ENCODE measurements at regions of chr12 and their contacts with region 1.

Region 1: GRCh38 chr12:31659087-31659933 is at the start of gene ETFBKMT:
- DNase-seq: peak; percentile 96
- ATAC-seq: peak; percentile 97
- H3K4me3 ChIP-seq: peak within 1 kb of the TSS; percentile 63 to 94 (median 86)
- H3K4me3 Mint-ChIP-seq: peak within 1 kb of the TSS; percentile 93
- H3K27ac ChIP-seq: peak within 1 kb of the TSS; percentile 93 to 97
- H3K27ac Mint-ChIP-seq: peak within 1 kb of the TSS; percentile 95
- H3K4me1 ChIP-seq: peaks cover 25 to 31% of the 10 kb centered on the region in 2 donors
- H3K4me1 Mint-ChIP-seq: peaks cover 29% of the 10 kb centered on the region
- H3K27me3 ChIP-seq: no peaks in the 10 kb centered on the region
- H3K27me3 Mint-ChIP-seq: no peaks in the 10 kb centered on the region
- CTCF ChIP-seq: peak; percentile 31
- total RNA-seq, gene ETFBKMT: 1.4 and 2.4 TPM in 2 replicates

Region 2: GRCh38 chr12:31406345-31406744 is 253.0 kb before region 1 on chr12:
- CTCF ChIA-PET with region 1: interaction called, 58 read pairs
- POLR2A ChIA-PET with region 1: interaction called, 8 read pairs
- intact Hi-C with region 1: no loop called
- DNase-seq: peak; percentile 55
- ATAC-seq: peak; percentile 26
- H3K4me3 ChIP-seq: no peak overlapping the region
- H3K4me3 Mint-ChIP-seq: peak overlapping the region; percentile 40
- H3K27ac ChIP-seq: peak overlapping the region; percentile 50 to 51
- H3K27ac Mint-ChIP-seq: peak overlapping the region; percentile 28
- H3K4me1 ChIP-seq: peaks cover 23 to 44% of the 10 kb centered on the region in 2 donors
- H3K4me1 Mint-ChIP-seq: peaks cover 24% of the 10 kb centered on the region
- H3K27me3 ChIP-seq: no peaks in the 10 kb centered on the region
- H3K27me3 Mint-ChIP-seq: no peaks in the 10 kb centered on the region
- CTCF ChIP-seq: no peak

Region 3: DNA sequence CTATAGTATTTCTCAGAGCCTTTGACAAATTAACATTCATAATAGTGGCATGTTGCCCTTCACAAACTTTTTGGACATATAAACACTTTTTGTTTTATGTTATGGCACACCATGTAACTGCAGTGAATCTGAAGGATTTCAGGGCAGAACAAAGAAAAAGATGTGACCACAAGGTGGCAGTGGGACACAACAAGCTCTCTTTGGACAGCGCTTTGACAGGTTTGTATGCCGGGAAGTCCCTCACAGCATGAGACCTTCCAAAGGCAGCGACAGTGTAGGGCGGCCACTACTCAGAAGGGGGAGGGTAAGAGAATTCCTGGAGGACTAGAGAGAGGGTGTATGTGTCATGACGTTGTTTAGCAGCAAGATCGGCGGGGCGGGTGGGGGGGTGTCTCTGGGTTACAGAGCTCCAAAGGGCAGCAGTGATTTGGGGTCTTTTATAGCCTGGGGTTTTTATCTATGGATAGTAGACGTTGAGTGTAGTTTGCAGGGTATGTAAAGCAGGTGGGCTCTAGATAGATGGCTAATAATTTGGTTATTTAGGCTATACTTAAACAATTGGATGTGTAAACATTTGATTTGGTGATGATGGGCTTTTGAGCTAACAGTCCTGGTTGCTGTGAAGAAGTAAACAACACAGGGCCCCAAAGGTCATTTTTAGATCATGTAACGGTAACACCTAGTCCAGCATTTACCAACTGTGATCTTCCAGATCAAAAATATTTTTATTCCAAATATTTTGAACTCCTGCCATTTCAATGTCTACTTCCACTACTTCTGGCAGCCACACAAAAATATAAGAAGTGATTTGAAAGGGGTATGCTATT is 23.0 kb after region 1 on chr12:
- CTCF ChIA-PET with region 1: interaction called, 5 read pairs
- POLR2A ChIA-PET with region 1: interaction called, 6 read pairs
- intact Hi-C with region 1: loop called (anchors 1 kb)
- DNase-seq: peak; percentile 89
- ATAC-seq: peak; percentile 71
- H3K4me3 ChIP-seq: no peak overlapping the region
- H3K4me3 Mint-ChIP-seq: peak overlapping the region; percentile 69
- H3K27ac ChIP-seq: peak overlapping the region; percentile 50 to 73
- H3K27ac Mint-ChIP-seq: peak overlapping the region; percentile 93
- H3K4me1 ChIP-seq: peaks cover 19 to 30% of the 10 kb centered on the region in 2 donors
- H3K4me1 Mint-ChIP-seq: peaks cover 31% of the 10 kb centered on the region
- H3K27me3 ChIP-seq: no peaks in the 10 kb centered on the region
- H3K27me3 Mint-ChIP-seq: no peaks in the 10 kb centered on the region
- CTCF ChIP-seq: peak; percentile 88

Region 4: GRCh38 chr12:31785318-31785717 is 126.0 kb after region 1 on chr12:
- CTCF ChIA-PET with region 1: no interaction called
- POLR2A ChIA-PET with region 1: interaction called, 10 read pairs
- intact Hi-C with region 1: no loop called
- DNase-seq: no peak
- ATAC-seq: no peak
- H3K4me3 ChIP-seq: no peak overlapping the region
- H3K4me3 Mint-ChIP-seq: no peak overlapping the region
- H3K27ac ChIP-seq: no peak overlapping the region
- H3K27ac Mint-ChIP-seq: no peak overlapping the region
- H3K4me1 ChIP-seq: no peaks in the 10 kb centered on the region
- H3K4me1 Mint-ChIP-seq: peaks cover 24% of the 10 kb centered on the region
- H3K27me3 ChIP-seq: no peaks in the 10 kb centered on the region
- H3K27me3 Mint-ChIP-seq: no peaks in the 10 kb centered on the region
- CTCF ChIP-seq: no peak

Region 5: DNA sequence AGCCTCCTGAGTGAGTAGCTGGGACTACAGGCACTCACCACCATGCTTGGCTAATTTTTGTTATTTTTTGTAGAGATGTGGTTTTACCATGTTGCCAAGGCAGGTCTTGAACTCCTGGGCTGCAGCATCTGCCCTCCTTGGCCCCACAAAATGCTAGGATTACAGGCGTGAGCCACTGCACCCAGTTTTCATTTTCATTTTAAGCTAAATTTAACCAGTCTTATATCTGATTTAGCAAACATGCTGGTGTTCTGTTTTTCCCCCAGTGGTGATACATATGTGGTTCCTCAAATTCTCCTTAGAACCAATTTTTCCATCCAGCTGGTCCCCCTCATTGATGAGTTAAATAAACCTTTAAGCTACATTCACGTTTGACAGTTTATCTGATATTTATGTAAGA is 403.6 kb after region 1 on chr12:
- CTCF ChIA-PET with region 1: no interaction called
- POLR2A ChIA-PET with region 1: no interaction called
- intact Hi-C with region 1: loop called (anchors 2 kb)
- DNase-seq: peak; percentile 8
- ATAC-seq: no peak
- H3K4me3 ChIP-seq: no peak overlapping the region
- H3K4me3 Mint-ChIP-seq: no peak overlapping the region
- H3K27ac ChIP-seq: no peak overlapping the region
- H3K27ac Mint-ChIP-seq: no peak overlapping the region
- H3K4me1 ChIP-seq: peaks cover 10 to 12% of the 10 kb centered on the region in 2 donors
- H3K4me1 Mint-ChIP-seq: peaks cover 13% of the 10 kb centered on the region
- H3K27me3 ChIP-seq: no peaks in the 10 kb centered on the region
- H3K27me3 Mint-ChIP-seq: no peaks in the 10 kb centered on the region
- CTCF ChIP-seq: no peak

Region 6: DNA sequence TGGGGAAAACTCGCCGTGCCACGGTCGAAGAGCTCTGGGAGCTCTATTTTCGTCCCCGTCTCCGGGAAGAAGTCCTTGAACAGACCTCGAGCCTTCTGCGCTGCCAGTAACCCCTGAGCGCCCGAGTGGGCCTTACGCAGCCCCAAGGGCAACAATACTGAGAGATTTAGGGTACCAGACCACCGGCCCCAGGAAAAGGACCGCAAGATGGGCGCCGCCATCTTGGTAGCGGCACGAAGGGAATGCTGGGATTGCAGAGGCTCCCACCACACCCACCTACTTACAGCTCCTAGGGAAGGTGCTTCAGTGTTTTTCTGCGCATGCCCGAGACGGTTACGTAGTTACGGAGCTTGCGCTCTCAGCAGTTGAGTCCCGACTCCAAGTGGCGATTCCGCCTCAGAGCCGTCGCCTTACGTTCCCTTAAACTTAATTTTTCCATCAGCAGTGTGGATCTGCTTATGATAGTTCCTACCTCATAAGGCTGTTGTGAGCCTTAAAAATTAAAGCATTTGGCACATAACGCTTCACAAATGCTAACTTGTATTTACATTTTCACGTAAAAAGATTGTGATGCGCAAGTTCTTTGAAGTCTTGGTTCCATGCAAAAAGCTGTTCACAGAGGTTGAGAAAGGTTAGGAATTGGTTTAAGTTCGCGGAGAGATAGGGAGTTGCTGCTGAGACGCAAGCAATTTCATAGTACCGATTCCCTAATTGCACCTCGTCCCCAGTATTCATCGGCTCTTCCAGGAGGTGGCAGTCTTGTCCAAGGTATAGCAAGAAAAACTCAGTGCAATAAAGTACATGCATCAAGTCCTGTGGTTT is 1096.6 kb after region 1 on chr12 and contains the start of gene YARS2:
- CTCF ChIA-PET with region 1: interaction called, 4 read pairs
- POLR2A ChIA-PET with region 1: no interaction called
- intact Hi-C with region 1: loop called (anchors 5 kb)
- DNase-seq: peak; percentile 93
- ATAC-seq: peak; percentile 85
- H3K4me3 ChIP-seq: peak within 1 kb of the TSS; percentile 78 to 97 (median 91)
- H3K4me3 Mint-ChIP-seq: peak within 1 kb of the TSS; percentile 93
- H3K27ac ChIP-seq: peak within 1 kb of the TSS; percentile 64 to 65
- H3K27ac Mint-ChIP-seq: peak within 1 kb of the TSS; percentile 89
- H3K4me1 ChIP-seq: peaks cover 12 to 15% of the 10 kb centered on the region in 2 donors
- H3K4me1 Mint-ChIP-seq: peaks cover 19% of the 10 kb centered on the region
- H3K27me3 ChIP-seq: no peaks in the 10 kb centered on the region
- H3K27me3 Mint-ChIP-seq: no peaks in the 10 kb centered on the region
- CTCF ChIP-seq: peak; percentile 92
- total RNA-seq, gene YARS2: 18.8 and 24.3 TPM in 2 replicates

Measured in B cell (primary cell).